GM13977 (cell line): ENCODE measurements at regions of chr2 and their contacts with region 1.

Region 1: DNA sequence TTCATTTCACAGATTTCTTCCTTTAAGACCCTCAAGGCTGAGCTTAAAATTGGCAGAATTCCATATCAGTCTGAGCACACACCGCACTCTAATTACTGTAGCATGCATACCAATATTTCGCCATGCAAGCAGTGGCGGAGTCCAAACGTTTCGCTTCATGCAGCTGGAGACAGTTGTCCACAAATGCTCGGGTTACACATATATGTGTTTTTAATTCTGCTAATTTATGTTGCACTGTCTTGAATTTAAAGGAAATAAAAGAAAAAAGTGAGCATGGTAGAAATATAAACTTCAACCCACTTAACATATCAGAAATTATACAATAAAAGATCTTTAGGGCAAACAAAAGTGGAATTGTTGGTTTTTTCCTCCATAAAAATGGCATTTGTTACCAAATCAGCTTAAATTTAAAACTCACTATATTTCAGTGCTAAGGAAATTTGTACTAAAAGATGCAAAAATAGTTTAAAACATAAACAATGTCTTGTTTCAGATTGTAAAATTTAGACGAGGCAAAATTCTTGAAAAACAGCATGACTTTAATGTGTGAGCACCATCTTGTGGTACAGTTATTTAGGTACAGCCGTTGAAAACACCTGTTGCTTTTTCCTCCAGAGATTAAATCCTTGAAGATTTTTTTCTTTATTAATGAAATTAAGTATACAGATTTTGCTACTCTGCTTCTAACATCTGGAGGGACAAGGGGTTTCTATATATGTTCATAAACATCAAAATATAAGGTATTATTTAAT is 24.1 kb upstream of the KANSL1L start:
- DNase-seq: peak; percentile 18
- CTCF ChIP-seq: peak; percentile 69

Region 2: DNA sequence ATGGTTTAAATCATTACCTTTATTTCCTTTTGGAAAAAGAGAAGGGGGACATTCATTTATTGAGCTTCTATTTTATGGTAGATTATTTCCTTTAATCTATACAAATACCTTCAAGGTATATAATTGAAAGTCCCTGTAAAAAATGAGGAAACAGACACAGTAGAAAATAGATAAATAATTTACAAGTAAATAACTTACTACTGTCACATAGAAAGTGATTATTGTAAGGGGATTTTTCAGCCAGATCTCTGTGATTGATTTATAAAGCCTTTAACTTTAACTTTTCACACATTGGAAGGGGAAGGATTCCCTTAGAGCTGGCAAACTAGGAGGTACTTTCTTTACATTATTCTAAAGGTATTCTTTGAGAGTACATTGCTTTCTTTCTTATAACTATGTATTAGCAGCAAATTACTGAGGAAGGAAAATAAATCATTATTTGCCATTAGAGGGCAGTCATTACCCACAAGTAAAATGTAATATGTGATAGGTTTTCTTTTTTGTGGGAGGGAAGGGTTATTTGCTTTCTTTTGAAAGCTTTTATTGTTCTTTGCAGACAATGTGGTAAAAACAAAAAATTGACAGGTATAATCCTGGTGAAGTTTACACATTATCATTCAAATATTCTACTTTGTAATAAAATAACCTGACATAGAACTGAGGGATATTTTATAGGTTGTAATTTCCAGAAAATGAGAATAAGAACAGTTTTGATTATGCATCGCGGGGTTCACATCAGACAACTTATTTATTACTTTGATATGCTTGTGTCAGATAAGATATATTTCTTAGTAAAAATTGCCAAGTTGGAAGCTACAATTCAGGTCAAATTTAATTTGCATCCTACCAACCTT is 217.7 kb before region 1 on chr2:
- in situ Hi-C with region 1: loop called (anchors 10 kb)
- DNase-seq: peak; percentile 36
- CTCF ChIP-seq: peak; percentile 48